Colonic mucosa (tissue), 4 donors: ENCODE measurements at regions of chr5 and their contacts with region 1.

Region 1: GRCh38 chr5:84274585-84275468 is 109.9 kb downstream of the EDIL3 start:
- DNase-seq: peak; percentile 59
- H3K4me3 ChIP-seq: no peak overlapping the region
- H3K27ac ChIP-seq: no peak overlapping the region
- H3K4me1 ChIP-seq: no peaks in the 10 kb centered on the region
- H3K27me3 ChIP-seq: no peaks in the 10 kb centered on the region
- CTCF ChIP-seq: peak; percentile 20

Region 2: DNA sequence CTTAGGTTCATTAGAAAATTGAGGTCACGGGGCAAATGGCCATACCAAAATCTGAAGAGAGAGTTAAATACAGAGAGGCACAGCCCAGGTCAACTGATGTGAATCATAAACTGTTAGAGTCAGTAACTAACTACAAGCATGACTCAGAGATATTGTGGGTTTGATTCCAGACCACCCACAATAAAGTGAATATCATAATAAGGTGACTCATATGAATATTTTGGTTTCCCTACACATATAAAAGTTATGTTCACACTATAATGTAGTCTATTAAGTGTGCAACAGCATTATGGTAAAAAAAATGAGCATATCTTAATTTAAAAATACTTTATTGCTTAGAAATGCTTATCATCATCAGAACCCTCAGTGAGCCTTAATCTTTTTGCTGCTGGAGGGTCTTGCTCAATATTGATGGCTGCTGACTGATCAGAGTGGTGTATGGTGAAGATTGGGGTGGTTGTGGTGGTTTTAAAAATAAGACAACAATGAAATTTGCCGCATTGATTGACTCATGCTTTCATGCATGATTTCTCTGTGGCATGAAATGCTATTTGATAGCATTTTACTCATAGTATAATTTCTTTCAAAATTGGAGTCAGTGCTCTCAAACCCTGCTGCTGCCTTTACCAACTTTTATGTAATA is 163.0 kb after region 1 on chr5:
- intact Hi-C with region 1: loop called (anchors 5 kb)
- DNase-seq: no peak
- H3K4me3 ChIP-seq: no peak overlapping the region
- H3K27ac ChIP-seq: no peak overlapping the region
- H3K4me1 ChIP-seq: no peaks in the 10 kb centered on the region
- H3K27me3 ChIP-seq: no peaks in the 10 kb centered on the region
- CTCF ChIP-seq: no peak